GM12878 (cell line): ENCODE measurements at regions of chr16 and their contacts with region 1.

Region 1: GRCh38 chr16:14354551-14355351 is 275.3 kb downstream of the PARN start:
- DNase-seq: peak; percentile 100
- ATAC-seq: peak; percentile 92
- H3K4me3 ChIP-seq: no peak overlapping the region
- H3K27ac ChIP-seq: peak overlapping the region; percentile 98
- H3K4me1 ChIP-seq: peaks cover 39% of the 10 kb centered on the region
- H3K27me3 ChIP-seq: no peaks in the 10 kb centered on the region
- CTCF ChIP-seq: no peak
- EP300 ChIP-seq: peak; percentile 98 to 99
- POLR2A ChIP-seq: no peak
- RAD21 ChIP-seq: no peak

Region 2: GRCh38 chr16:14392960-14393359 is 38.2 kb after region 1 on chr16:
- CTCF ChIA-PET with region 1: no interaction called
- POLR2A ChIA-PET with region 1: no interaction called
- RAD21 ChIA-PET with region 1: no interaction called
- SMC1A ChIA-PET with region 1: no interaction called
- in situ Hi-C with region 1: loop called (anchors 5 kb)
- intact Hi-C with region 1: no loop called
- DNase-seq: no peak
- ATAC-seq: peak; percentile 41; the same call in 1 of the 3 replicates
- H3K4me3 ChIP-seq: no peak overlapping the region
- H3K27ac ChIP-seq: no peak overlapping the region
- H3K4me1 ChIP-seq: no peaks in the 10 kb centered on the region
- H3K27me3 ChIP-seq: no peaks in the 10 kb centered on the region
- CTCF ChIP-seq: no peak
- EP300 ChIP-seq: no peak
- POLR2A ChIP-seq: no peak
- RAD21 ChIP-seq: no peak

Region 3: GRCh38 chr16:14399378-14400284 is 44.9 kb after region 1 on chr16:
- CTCF ChIA-PET with region 1: no interaction called
- POLR2A ChIA-PET with region 1: no interaction called
- RAD21 ChIA-PET with region 1: interaction called, 4 read pairs
- SMC1A ChIA-PET with region 1: interaction called, 7 read pairs
- in situ Hi-C with region 1: loop called (anchors 5 kb)
- intact Hi-C with region 1: loop called (anchors 1 kb)
- DNase-seq: peak; percentile 60
- ATAC-seq: peak; percentile 94
- H3K4me3 ChIP-seq: no peak overlapping the region
- H3K27ac ChIP-seq: peak overlapping the region; percentile 54
- H3K4me1 ChIP-seq: peaks cover 15% of the 10 kb centered on the region
- H3K27me3 ChIP-seq: no peaks in the 10 kb centered on the region
- CTCF ChIP-seq: no peak
- EP300 ChIP-seq: no peak
- POLR2A ChIP-seq: no peak
- RAD21 ChIP-seq: no peak

Region 4: DNA sequence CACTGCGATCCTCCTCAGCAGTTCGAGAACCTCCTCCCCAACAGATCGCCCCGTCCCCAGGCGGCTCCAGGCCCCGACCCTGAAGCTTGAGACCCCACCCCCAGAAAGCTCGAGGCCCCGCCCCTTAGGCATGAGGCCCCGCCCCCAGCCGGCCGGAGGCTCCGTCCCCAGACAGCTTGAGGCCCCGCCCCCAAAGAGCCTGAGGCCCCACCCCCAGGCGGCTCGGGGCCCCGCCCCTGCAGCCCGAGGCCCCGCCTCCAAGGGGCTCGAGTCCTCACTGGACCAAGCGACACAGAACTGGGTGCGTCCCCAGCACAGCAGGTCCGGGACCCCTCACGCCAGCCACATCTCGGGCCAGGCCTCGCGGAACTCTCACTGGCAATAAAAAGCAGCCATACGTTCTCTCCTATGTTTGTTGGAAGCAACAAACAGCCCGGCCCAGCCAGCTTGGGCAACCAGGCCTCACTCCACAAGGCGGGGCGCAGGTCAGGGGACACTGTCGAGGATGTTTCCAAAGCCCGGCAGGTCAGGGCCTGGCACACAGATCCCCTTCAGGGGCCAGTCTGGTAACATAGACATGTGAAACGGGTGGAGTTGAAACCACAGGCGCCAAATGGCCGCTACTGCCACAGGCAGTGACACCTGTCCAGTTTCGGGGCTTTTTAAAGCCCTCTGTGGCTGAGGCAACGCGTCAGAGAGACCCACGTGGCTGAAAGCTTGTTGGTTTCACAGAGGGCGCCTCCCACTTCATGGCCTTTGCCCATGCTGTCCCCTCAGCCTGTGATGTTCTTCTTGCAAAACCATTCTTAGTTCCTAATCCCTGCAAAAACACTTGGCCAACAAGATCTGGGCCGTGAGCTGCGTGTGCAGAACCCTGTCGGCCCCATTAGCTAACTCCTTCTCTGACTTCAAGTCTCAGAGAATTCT is 51.1 kb after region 1 on chr16:
- CTCF ChIA-PET with region 1: interaction called, 3 read pairs
- POLR2A ChIA-PET with region 1: interaction called, 5 read pairs
- RAD21 ChIA-PET with region 1: interaction called, 4 read pairs
- SMC1A ChIA-PET with region 1: interaction called, 9 read pairs
- in situ Hi-C with region 1: no loop called
- intact Hi-C with region 1: loop called (anchors 2 kb)
- DNase-seq: peak; percentile 77
- ATAC-seq: peak; percentile 92
- H3K4me3 ChIP-seq: no peak overlapping the region
- H3K27ac ChIP-seq: peak overlapping the region; percentile 90
- H3K4me1 ChIP-seq: peaks cover 29% of the 10 kb centered on the region
- H3K27me3 ChIP-seq: no peaks in the 10 kb centered on the region
- CTCF ChIP-seq: no peak
- EP300 ChIP-seq: peak; percentile 77 to 78; a peak in 3 of 4 replicates
- POLR2A ChIP-seq: peak; percentile 53; the same call in 1 of the 2 replicates
- RAD21 ChIP-seq: no peak

Region 5: GRCh38 chr16:14501331-14502255 is 146.8 kb after region 1 on chr16:
- CTCF ChIA-PET with region 1: interaction called, 4 read pairs
- POLR2A ChIA-PET with region 1: interaction called, 3 read pairs
- RAD21 ChIA-PET with region 1: interaction called, 18 read pairs
- SMC1A ChIA-PET with region 1: interaction called, 15 read pairs
- in situ Hi-C with region 1: no loop called
- intact Hi-C with region 1: loop called (anchors 1 kb)
- DNase-seq: peak; percentile 50
- ATAC-seq: peak; percentile 35
- H3K4me3 ChIP-seq: no peak overlapping the region
- H3K27ac ChIP-seq: peak overlapping the region; percentile 75
- H3K4me1 ChIP-seq: peaks cover 61% of the 10 kb centered on the region
- H3K27me3 ChIP-seq: no peaks in the 10 kb centered on the region
- CTCF ChIP-seq: no peak
- EP300 ChIP-seq: no peak; a peak in 1 of 4 replicates
- POLR2A ChIP-seq: no peak
- RAD21 ChIP-seq: no peak